Caco-2 (cell line): ENCODE measurements at regions of chr6 and their contacts with region 1.

Region 1: DNA sequence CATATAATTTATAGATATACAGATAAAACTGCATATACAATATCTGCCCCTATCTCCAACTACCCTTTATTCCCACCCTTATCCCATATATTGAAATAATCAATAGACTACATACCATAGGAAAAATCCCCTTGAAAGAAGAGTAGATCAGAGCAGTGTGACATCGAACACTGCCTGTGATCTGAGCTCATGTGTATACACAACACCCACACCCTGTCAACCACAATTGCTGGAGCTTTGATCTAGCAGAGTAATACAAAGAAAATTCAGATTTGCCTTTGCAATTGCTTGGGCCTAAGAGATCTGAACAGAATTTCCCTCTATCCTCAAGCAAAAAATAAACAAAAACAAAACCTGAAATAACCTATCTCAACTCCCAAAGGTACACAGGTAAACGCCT is 119.3 kb downstream of the ASCC3 start:
- DNase-seq: no peak
- H3K4me3 ChIP-seq: no peak overlapping the region
- H3K4me3 Mint-ChIP-seq: no peak overlapping the region
- H3K27ac Mint-ChIP-seq: no peak overlapping the region
- H3K4me1 ChIP-seq: peaks cover 11% of the 10 kb centered on the region; the same call in 1 of the 2 replicates
- H3K4me1 Mint-ChIP-seq: peaks cover 8% of the 10 kb centered on the region
- H3K27me3 ChIP-seq: no peaks in the 10 kb centered on the region
- H3K27me3 Mint-ChIP-seq: no peaks in the 10 kb centered on the region
- CTCF ChIP-seq: no peak

Region 2: DNA sequence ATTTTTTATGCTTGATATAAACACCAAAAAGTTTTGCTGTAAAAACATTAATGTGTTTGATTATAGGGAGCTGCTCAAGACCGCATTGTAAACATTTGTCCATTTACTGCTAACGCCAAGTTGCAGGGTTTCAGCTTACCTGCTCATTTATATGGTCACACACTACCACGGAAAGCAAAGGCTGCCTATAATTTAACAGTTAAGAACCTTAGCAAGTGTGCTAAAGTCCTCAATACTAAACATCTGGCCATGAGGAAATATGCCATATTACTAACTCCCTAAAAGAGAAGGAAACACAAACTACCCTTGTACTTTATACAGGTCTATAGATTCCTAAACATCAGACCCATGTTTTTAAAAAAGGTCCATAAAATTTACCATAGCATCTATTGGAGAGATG is 10.3 kb before region 1 on chr6:
- CTCF ChIA-PET with region 1: no interaction called
- POLR2A ChIA-PET with region 1: no interaction called
- intact Hi-C with region 1: loop called (anchors 1 kb)
- DNase-seq: no peak
- H3K4me3 ChIP-seq: no peak overlapping the region
- H3K4me3 Mint-ChIP-seq: no peak overlapping the region
- H3K27ac Mint-ChIP-seq: no peak overlapping the region
- H3K4me1 ChIP-seq: no peaks in the 10 kb centered on the region
- H3K4me1 Mint-ChIP-seq: no peaks in the 10 kb centered on the region
- H3K27me3 ChIP-seq: no peaks in the 10 kb centered on the region
- H3K27me3 Mint-ChIP-seq: no peaks in the 10 kb centered on the region
- CTCF ChIP-seq: no peak